ENCODE measurements at regions of chr16 and their contacts with region 1.

Region 1: GRCh38 chr16:65441501-65441900 is 319.6 kb upstream of the CDH11 start:
- DNase-seq: no peak
- H3K4me3 Mint-ChIP-seq: no peak overlapping the region
- H3K27ac Mint-ChIP-seq: no peak overlapping the region
- H3K4me1 Mint-ChIP-seq: no peaks in the 10 kb centered on the region
- H3K27me3 Mint-ChIP-seq: no peaks in the 10 kb centered on the region
- CTCF ChIP-seq: no peak

Region 2: DNA sequence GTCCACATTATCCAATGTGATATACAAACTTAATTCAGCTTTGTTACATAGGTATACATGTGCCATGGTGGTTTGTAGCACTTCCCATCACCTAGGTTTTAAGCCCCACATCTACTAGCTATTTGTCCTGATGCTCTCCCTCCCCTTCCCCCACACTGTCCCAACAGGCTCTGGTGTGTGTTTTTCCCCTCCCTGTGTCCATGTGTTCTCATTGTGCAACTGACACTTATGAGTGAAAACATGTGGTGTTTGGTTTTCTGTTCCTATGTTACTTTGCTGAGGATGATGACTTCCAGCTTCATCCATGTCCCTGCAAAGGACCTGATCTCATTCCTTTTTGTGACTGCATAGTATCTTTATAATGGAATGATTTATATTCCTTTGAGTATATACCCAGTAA is 516.3 kb before region 1 on chr16:
- CTCF ChIA-PET with region 1: no interaction called
- intact Hi-C with region 1: no loop called
- DNase-seq: no peak
- H3K4me3 Mint-ChIP-seq: no peak overlapping the region
- H3K27ac Mint-ChIP-seq: no peak overlapping the region
- H3K4me1 Mint-ChIP-seq: no peaks in the 10 kb centered on the region
- H3K27me3 Mint-ChIP-seq: no peaks in the 10 kb centered on the region
- CTCF ChIP-seq: no peak

Region 3: DNA sequence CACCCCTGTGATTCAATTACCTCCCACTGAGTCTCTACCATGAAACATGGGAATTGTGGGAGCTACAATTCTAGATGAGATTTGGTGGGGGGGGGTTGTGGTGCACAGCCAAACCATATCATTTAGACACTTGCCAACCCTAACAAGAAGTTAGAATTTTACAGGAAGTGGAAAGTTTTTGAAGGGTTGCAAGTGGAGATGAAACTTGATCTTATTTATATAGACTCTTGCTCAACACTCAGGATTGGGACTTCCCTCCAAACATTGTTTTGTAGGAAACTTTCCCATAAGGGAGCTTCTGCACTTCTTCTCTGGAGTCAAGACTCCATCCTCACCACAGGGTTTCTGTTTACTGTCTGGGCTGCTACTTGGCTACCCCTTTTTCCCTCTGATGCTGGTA is 52.9 kb before region 1 on chr16:
- CTCF ChIA-PET with region 1: no interaction called
- intact Hi-C with region 1: loop called (anchors 5 kb)
- DNase-seq: no peak
- H3K4me3 Mint-ChIP-seq: no peak overlapping the region
- H3K27ac Mint-ChIP-seq: no peak overlapping the region
- H3K4me1 Mint-ChIP-seq: no peaks in the 10 kb centered on the region
- H3K27me3 Mint-ChIP-seq: no peaks in the 10 kb centered on the region
- CTCF ChIP-seq: no peak